Activated CD8-positive, alpha-beta memory T cell treated with anti-CD3 and anti-CD28 coated beads, Interleukin-2, amount 10 ng/mL, durations not matched to agents 7 days and 5 days (primary cell): ENCODE measurements at regions of chr11 and their contacts with region 1.

Region 1: GRCh38 chr11:67439321-67439883 is 1.9 kb upstream of the PTPRCAP start:
- DNase-seq: peak; percentile 59
- ATAC-seq: no peak
- H3K4me3 Mint-ChIP-seq: peak overlapping the region; percentile 95
- H3K27ac Mint-ChIP-seq: peak overlapping the region; percentile 93
- H3K4me1 Mint-ChIP-seq: peaks cover 54% of the 10 kb centered on the region
- H3K27me3 Mint-ChIP-seq: no peaks in the 10 kb centered on the region

Region 2: GRCh38 chr11:67409261-67409666 is 30.1 kb before region 1 on chr11:
- CTCF ChIA-PET with region 1: interaction called, 96 read pairs
- DNase-seq: peak; percentile 95
- ATAC-seq: peak; percentile 67
- H3K4me3 Mint-ChIP-seq: peak overlapping the region; percentile 90
- H3K27ac Mint-ChIP-seq: peak overlapping the region; percentile 92
- H3K4me1 Mint-ChIP-seq: peaks cover 72% of the 10 kb centered on the region
- H3K27me3 Mint-ChIP-seq: no peaks in the 10 kb centered on the region

Region 3: GRCh38 chr11:67468835-67469811 is 29.7 kb after region 1 on chr11 and contains the start of gene TMEM134:
- CTCF ChIA-PET with region 1: interaction called, 10 read pairs
- DNase-seq: peak; percentile 95
- ATAC-seq: peak; percentile 86
- H3K4me3 Mint-ChIP-seq: peak within 1 kb of the TSS; percentile 83
- H3K27ac Mint-ChIP-seq: peak within 1 kb of the TSS; percentile 82
- H3K4me1 Mint-ChIP-seq: peaks cover 30% of the 10 kb centered on the region
- H3K27me3 Mint-ChIP-seq: no peaks in the 10 kb centered on the region
- total RNA-seq, gene TMEM134: 32.8 to 41.9 TPM

Region 4: DNA sequence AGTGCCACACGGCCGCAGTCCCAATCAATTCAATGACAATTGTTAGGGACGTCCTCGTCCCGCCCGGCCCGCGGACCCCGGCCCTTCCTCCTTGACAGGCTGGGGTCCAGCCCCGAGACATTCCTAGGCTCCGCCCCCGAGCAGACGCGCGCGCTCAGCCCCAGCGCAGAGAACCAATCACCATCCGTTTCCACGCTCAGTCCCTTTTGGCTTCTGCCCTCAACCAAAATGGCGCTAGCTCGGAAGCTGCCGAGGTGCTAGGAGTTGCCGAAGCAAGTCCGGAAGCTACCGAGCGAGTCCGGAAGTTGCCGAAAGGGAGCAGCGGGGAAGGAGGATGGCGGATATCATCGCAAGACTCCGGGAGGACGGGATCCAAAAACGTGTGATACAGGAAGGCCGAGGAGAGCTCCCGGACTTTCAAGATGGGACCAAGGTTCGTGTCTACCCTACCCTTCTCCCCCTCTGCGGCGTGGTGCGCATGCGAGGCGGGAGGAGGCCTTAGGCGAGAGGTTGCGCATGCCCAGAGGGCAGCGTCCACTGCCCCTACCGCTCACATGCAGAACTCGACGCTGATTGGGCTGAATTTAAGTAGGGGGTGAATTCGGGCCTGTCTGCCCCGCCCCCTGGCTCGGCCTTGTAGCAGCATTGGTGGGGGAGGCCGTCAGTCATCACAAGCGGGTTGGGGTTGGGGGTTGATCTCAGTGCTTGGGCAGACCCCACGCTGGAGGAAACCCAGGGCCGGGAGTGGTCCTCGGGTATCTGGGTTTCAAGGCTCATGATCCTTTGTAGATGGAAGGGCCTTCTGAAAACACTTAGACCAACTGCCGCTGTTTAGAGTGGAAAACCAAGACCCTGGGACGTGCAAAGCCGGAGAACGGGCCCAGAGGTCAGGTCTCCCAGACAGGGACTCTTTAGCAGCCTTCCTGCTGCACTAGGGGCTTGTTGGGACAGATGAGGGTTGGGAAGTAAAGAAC is 43.7 kb after region 1 on chr11 and contains the start of gene AIP:
- CTCF ChIA-PET with region 1: interaction called, 10 read pairs
- DNase-seq: peak; percentile 99
- ATAC-seq: peak; percentile 81
- H3K4me3 Mint-ChIP-seq: peak within 1 kb of the TSS; percentile 80
- H3K27ac Mint-ChIP-seq: peak within 1 kb of the TSS; percentile 99
- H3K4me1 Mint-ChIP-seq: peaks cover 54% of the 10 kb centered on the region
- H3K27me3 Mint-ChIP-seq: peaks cover 4% of the 10 kb centered on the region
- total RNA-seq, gene AIP: 168 to 178 TPM

Region 5: GRCh38 chr11:67505605-67506396 is 66.4 kb after region 1 on chr11:
- CTCF ChIA-PET with region 1: interaction called, 12 read pairs
- DNase-seq: peak; percentile 93
- ATAC-seq: peak; percentile 50
- H3K4me3 Mint-ChIP-seq: peak overlapping the region; percentile 92
- H3K27ac Mint-ChIP-seq: peak overlapping the region; percentile 94
- H3K4me1 Mint-ChIP-seq: peaks cover 51% of the 10 kb centered on the region
- H3K27me3 Mint-ChIP-seq: peaks cover 2% of the 10 kb centered on the region

Region 6: DNA sequence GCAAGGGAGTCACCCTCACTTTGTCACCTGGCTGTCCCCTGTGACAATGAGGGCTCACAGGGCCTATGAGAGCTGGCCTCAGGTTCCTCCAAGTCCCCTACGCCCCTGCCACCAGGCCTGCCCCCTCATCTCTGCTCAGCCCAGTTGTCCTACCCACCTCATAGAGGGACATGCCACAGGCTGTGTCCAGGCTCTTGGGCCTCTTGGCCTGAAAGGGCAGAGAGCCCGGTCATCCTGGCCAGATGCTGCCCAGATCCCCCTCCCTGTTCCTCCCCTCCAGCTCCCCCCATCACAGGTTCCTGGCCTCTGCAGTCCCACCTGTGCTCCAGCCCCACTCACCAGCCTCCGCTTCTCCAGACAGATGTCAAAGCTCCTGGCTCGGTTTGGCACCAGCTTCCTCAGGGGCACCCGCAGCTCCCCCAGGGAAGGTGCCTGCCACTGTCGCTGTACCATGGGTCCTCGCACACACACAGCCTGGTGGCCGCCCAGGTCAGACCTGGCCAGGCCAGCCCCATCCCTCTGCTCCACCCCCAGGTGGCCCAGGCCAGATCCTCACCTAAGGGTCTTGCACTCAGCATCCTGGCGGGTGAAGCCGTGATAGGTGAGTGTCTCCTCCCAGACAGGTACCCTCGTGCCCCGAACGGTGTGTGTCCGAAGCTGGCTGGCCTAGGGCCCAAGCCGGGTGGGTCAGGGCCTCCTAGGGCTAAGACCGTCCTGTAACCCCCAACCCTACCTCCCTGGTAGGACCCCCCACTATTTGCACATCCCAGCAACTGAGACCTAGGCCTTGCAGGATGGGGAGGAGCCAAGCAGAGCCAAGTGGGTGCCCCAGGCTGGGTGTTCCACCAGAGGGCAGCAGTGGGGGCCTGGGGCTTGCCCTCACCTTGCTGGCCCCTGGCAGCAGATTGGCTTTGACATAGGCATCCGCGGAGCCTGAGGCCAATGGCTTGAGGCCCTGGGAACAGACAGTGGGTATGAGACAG is 175.6 kb after region 1 on chr11:
- CTCF ChIA-PET with region 1: no interaction called
- DNase-seq: peak; percentile 83
- ATAC-seq: peak; percentile 57
- H3K4me3 Mint-ChIP-seq: peak overlapping the region; percentile 65
- H3K27ac Mint-ChIP-seq: peak overlapping the region; percentile 94
- H3K4me1 Mint-ChIP-seq: peaks cover 37% of the 10 kb centered on the region
- H3K27me3 Mint-ChIP-seq: peaks cover 9% of the 10 kb centered on the region